ENCODE measurements at regions of chr12 and their contacts with region 1.

Region 1: DNA sequence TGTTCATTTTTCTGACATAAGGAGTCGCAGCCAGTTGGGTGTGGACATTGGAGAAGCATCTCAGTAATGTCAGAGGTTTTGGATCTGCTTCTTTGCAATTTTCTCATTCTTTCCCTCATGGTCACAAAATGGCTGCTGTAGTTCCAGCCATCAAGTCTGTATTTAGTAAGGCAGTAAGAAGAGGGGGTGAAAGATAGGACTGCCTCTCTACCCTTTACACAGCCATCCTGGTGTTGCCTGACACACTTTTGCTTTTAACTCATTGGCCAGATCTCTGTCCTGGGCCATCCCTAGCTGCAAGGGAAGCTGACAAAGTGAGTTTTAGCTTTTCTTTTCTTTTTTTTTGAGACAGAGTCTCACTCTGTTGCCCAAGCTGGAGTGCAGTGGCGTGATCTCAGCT is 66.2 kb downstream of the EID3 start:
- DNase-seq: no peak
- H3K4me3 ChIP-seq: no peak overlapping the region
- H3K4me1 ChIP-seq: peaks cover 9% of the 10 kb centered on the region
- H3K27me3 ChIP-seq: no peaks in the 10 kb centered on the region

Region 2: GRCh38 chr12:104201238-104202001 is 168.3 kb before region 1 on chr12:
- in situ Hi-C with region 1: loop called (anchors 5 kb)
- DNase-seq: peak; percentile 62 to 67
- H3K4me3 ChIP-seq: no peak overlapping the region
- H3K4me1 ChIP-seq: peaks cover 12% of the 10 kb centered on the region
- H3K27me3 ChIP-seq: no peaks in the 10 kb centered on the region

Measured in HAP-1 (cell line).